Pancreas (tissue), 10 donors: ENCODE measurements at regions of chr1 and their contacts with region 1.

Region 1: GRCh38 chr1:201254625-201255506 is 28.4 kb upstream of the PKP1 start:
- DNase-seq: peak in 5 of 6 donors; percentile 27 to 96 (median 74)
- ATAC-seq: peak; percentile 66 to 91 (median 87)
- H3K4me3 ChIP-seq: no peak overlapping the region
- H3K27ac ChIP-seq: no peak overlapping the region
- H3K4me1 ChIP-seq: no peaks in the 10 kb centered on the region
- H3K27me3 ChIP-seq: no peaks in the 10 kb centered on the region
- CTCF ChIP-seq: peak; percentile 96 to 98 (median 97)

Region 2: GRCh38 chr1:201224666-201225370 is 30.0 kb before region 1 on chr1:
- intact Hi-C with region 1: no loop called
- DNase-seq: no peak
- ATAC-seq: no peak
- H3K4me3 ChIP-seq: no peak overlapping the region
- H3K27ac ChIP-seq: no peak overlapping the region
- H3K4me1 ChIP-seq: no peaks in the 10 kb centered on the region
- H3K27me3 ChIP-seq: no peaks in the 10 kb centered on the region
- CTCF ChIP-seq: no peak

Region 3: DNA sequence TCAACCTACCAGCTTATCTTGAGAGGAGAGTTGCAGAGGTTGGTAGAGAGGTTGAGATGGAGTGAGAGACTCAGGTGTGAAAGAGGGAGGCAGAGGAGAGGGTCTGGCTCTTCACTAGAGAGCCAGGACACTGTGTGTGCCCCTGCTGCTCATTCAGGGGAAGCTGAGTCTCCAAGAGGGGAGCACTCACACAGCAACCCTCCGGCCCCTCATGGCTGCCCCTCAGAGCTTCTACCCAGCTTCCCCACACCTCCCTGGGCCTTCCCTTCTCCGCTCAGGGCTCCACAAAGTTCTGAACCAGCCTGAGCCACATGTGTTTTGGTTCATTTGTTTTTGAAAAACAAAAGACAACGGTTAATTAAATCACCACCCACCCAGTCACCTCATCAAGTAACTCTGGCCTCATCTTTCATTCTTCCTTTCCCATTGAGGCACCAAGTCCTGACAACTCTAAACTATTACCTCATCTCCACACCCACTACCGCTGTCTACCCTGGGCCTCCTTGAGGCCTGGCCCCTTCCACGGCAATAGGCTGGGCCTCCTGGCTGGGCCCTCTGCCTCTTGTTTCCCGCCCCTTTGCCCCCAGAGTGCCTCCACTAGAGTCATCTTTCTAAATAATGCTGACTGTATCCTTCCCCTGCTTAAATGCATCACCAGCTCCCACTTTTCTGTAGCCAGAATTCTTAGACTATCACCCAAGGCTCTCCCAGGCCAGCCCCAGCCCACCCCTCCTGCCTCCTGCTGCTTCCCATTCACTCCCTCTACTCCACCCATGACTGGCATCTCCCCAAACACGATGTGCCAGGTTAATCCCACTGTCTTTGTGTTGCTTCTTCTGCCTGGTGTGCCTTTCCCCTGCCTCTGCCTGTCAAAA is 89.6 kb after region 1 on chr1:
- intact Hi-C with region 1: no loop called
- DNase-seq: peak in 2 of 6 donors; percentile 17 to 25
- ATAC-seq: no peak
- H3K4me3 ChIP-seq: no peak overlapping the region
- H3K27ac ChIP-seq: no peak overlapping the region
- H3K4me1 ChIP-seq: no peaks in the 10 kb centered on the region
- H3K27me3 ChIP-seq: no peaks in the 10 kb centered on the region
- CTCF ChIP-seq: no peak

Region 4: GRCh38 chr1:201361652-201362504 is 107.0 kb after region 1 on chr1:
- intact Hi-C with region 1: loop called (anchors 2 to 10 kb)
- DNase-seq: peak in 3 of 6 donors; percentile 56 to 67 (median 67)
- ATAC-seq: peak; percentile 40 to 88 (median 81)
- H3K4me3 ChIP-seq: no peak overlapping the region
- H3K27ac ChIP-seq: no peak overlapping the region
- H3K4me1 ChIP-seq: no peaks in the 10 kb centered on the region
- H3K27me3 ChIP-seq: no peaks in the 10 kb centered on the region
- CTCF ChIP-seq: peak; percentile 55 to 74 (median 68)

Region 5: GRCh38 chr1:201625226-201625761 is 370.4 kb after region 1 on chr1:
- intact Hi-C with region 1: no loop called
- DNase-seq: no peak
- ATAC-seq: peak in 3 of 4 donors; percentile 19 to 59 (median 39)
- H3K4me3 ChIP-seq: no peak overlapping the region
- H3K27ac ChIP-seq: no peak overlapping the region
- H3K4me1 ChIP-seq: no peaks in the 10 kb centered on the region
- H3K27me3 ChIP-seq: no peaks in the 10 kb centered on the region
- CTCF ChIP-seq: no peak